ENCODE measurements at regions of chr17 and their contacts with region 1.

Region 1: GRCh38 chr17:29589524-29590410 is at the start of gene GIT1:
- DNase-seq: peak; percentile 81 to 90 (median 88)
- H3K4me3 ChIP-seq: peak within 1 kb of the TSS; percentile 56 to 90 (median 78)
- H3K27ac ChIP-seq: peak within 1 kb of the TSS in 1 of 2 experiments; percentile 54
- H3K4me1 ChIP-seq: peaks cover 4 to 86% (median 85%) of the 10 kb centered on the region in 4 experiments
- H3K27me3 ChIP-seq: no peaks in the 10 kb centered on the region

Region 2: DNA sequence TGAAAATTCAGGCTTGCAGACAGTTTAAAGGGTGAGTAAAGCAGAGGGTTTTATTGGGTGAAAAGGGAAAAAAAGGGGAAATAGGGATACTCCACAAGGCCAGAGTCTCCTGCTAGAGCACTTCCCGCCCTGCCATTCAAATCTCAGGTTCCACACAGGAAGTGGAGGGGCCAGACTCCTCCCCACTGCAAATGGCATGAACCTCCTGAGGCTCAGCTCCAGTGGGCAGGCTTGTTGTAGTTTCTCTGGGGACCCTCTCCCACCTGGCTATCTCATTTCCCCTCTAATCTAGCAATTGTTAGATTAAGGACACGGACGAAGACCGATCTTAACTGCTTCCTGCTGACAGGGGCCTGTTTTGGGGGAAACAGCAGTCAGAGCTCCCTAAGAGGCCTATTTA is 156.2 kb before region 1 on chr17:
- CTCF ChIA-PET with region 1: no interaction called
- POLR2A ChIA-PET with region 1: no interaction called
- DNase-seq: peak; percentile 16 to 56 (median 49)
- H3K4me3 ChIP-seq: peak overlapping the region in 4 of 7 experiments; percentile 20 to 55 (median 24)
- H3K27ac ChIP-seq: peak overlapping the region in 1 of 2 experiments; percentile 45
- H3K4me1 ChIP-seq: peaks cover 4 to 14% (median 8%) of the 10 kb centered on the region in 4 experiments
- H3K27me3 ChIP-seq: no peaks in the 10 kb centered on the region

Region 3: DNA sequence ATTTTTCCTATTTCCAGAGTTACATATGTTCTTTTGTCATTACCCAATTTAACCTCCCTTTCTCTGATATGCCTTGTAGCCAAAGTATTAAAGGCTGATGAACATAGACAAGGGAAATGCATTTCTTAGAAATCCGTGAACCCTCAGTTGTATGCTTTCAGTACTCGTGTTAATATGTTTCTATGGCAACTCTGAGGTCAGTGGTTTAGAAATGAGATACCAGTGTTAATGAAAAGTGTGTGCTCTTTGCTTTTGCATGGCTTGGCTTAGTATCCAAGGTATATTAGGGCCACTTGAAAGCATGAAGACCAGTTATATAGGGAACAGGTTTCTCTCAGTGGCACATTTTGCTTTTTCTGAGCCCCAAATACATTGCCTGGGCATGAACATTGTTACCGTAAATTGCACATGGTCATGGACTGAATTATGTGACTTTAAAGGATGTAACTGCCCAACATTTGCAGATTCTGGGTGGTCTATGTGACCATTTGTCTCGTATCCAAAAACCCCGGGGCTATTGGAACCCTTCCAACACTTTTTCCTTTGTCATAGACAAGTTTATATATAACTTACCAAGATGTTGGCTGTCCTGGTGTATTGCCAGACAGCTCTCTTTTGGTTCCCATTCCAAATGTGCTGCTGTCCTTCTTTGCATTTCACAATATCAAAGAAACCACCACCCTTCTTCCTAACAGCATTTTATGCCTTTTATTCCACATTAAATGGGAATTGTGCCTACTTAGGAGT is 40.4 kb before region 1 on chr17:
- CTCF ChIA-PET with region 1: no interaction called
- POLR2A ChIA-PET with region 1: no interaction called
- DNase-seq: peak in 2 of 3 donors; percentile 55 to 65
- H3K4me3 ChIP-seq: peak overlapping the region in 1 of 7 experiments; percentile 8
- H3K27ac ChIP-seq: no peak overlapping the region
- H3K4me1 ChIP-seq: peaks cover 0 to 11% (median 7%) of the 10 kb centered on the region in 4 experiments
- H3K27me3 ChIP-seq: no peaks in the 10 kb centered on the region

Region 4: DNA sequence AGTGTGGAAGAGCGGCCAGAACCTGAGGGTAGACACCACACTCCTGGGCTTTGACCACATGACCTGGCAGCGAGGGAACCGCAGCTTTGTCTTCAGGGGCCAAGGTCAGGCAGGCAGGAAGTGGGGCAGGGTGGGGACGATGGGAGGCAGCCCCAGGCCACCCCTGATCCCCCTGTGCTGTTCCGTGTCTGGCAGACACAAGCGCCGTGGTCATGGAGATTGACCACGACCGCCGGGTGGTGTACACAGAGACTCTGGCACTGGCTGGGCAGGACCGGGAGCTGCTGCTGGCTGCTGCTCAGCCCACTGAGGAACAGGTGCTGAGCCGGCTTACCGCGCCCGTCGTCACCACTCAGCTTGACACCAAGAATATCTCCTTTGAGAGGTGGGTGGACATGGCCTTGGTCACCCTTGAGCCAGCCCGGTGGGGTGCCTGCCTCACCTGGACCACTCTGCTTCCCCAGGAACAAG is 19.2 kb after region 1 on chr17:
- CTCF ChIA-PET with region 1: interaction called, 179 read pairs
- POLR2A ChIA-PET with region 1: interaction called, 6 read pairs
- DNase-seq: no peak
- H3K4me3 ChIP-seq: no peak overlapping the region
- H3K27ac ChIP-seq: no peak overlapping the region
- H3K4me1 ChIP-seq: peaks cover 0 to 12% (median 11%) of the 10 kb centered on the region in 4 experiments
- H3K27me3 ChIP-seq: peaks cover 0 to 7% (median 0%) of the 10 kb centered on the region in 5 experiments

Region 5: DNA sequence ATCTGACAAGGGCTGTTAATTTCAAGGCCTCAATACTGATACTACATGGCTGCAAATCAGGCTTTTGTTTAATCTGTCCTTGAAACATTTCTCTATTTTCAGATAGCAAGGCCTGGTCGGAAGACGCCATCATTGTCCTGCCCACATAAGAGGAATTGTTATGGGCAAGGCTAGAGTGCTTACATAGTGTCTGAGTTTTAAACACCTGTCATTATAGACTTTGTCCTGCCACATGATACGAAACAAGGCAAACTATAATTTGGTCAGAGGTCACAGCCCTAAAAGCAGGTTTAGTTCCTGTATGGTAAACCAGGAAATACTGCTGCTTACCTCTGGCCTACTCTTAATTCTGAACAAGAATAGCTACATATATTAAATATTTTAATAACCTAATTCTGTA is 235.8 kb after region 1 on chr17:
- CTCF ChIA-PET with region 1: no interaction called
- POLR2A ChIA-PET with region 1: no interaction called
- DNase-seq: no peak
- H3K4me3 ChIP-seq: no peak overlapping the region
- H3K27ac ChIP-seq: no peak overlapping the region
- H3K4me1 ChIP-seq: no peaks in the 10 kb centered on the region
- H3K27me3 ChIP-seq: no peaks in the 10 kb centered on the region

Measured in common myeloid progenitor, CD34-positive (primary cell).